ENCODE measurements at regions of chr7 and their contacts with region 1.

Region 1: GRCh38 chr7:92088266-92088665 is 46.0 kb downstream of the CYP51A1 start:
- DNase-seq: no peak
- H3K4me3 ChIP-seq: no peak overlapping the region
- H3K27ac ChIP-seq: no peak overlapping the region
- H3K4me1 ChIP-seq: no peaks in the 10 kb centered on the region
- H3K27me3 ChIP-seq: no peaks in the 10 kb centered on the region
- CTCF ChIP-seq: no peak

Region 2: GRCh38 chr7:90988516-90988915 is 1099.8 kb before region 1 on chr7:
- intact Hi-C with region 1: no loop called
- DNase-seq: no peak
- H3K4me3 ChIP-seq: no peak overlapping the region
- H3K27ac ChIP-seq: no peak overlapping the region
- H3K4me1 ChIP-seq: no peaks in the 10 kb centered on the region
- H3K27me3 ChIP-seq: no peaks in the 10 kb centered on the region
- CTCF ChIP-seq: no peak

Region 3: GRCh38 chr7:91953618-91954017 is 134.6 kb before region 1 on chr7:
- intact Hi-C with region 1: no loop called
- DNase-seq: no peak
- H3K4me3 ChIP-seq: no peak overlapping the region
- H3K27ac ChIP-seq: no peak overlapping the region
- H3K4me1 ChIP-seq: peaks cover 0 to 25% (median 6%) of the 10 kb centered on the region in 4 donors
- H3K27me3 ChIP-seq: no peaks in the 10 kb centered on the region
- CTCF ChIP-seq: no peak

Region 4: GRCh38 chr7:92200791-92201190 is 112.5 kb after region 1 on chr7:
- intact Hi-C with region 1: loop called (anchors 10 kb)
- DNase-seq: no peak
- H3K4me3 ChIP-seq: no peak overlapping the region
- H3K27ac ChIP-seq: no peak overlapping the region
- H3K4me1 ChIP-seq: no peaks in the 10 kb centered on the region
- H3K27me3 ChIP-seq: no peaks in the 10 kb centered on the region
- CTCF ChIP-seq: no peak

Measured in tibial artery (tissue), 4 donors.